Prostate gland (tissue), 2 donors: ENCODE measurements at regions of chr9 and their contacts with region 1.

Region 1: DNA sequence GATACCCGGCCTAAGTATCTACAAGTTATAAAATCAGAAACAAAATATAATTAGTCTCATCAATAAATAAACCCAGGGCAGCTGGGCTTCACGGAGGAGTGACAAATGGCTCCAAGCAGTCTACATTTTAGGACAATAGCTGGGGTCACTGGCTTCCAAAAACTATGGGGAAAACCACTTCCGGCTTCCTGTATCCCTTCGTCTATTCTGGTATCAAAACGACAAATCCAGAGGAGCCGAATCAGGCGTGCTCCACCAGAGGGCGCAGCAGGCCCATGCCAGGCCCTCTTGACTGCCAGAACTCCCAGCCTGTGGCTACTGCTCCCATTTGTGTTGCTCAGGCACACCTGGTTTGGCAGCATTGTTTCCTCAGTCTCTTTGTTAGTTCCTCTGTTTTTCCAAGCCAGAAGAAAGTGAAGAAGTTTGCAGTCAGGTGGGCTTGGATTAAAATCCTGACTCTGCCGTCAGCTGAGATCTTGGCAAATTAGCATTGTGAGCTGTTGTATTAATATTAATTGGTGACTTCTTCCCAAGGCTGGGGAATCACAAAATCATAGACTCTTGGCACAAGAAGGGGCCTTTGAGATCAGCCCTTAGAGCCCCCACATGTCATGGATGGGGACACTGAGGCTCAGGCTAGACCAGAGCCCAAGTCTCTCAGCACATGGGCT is 11.6 kb upstream of the RAB14 start:
- DNase-seq: peak; percentile 86
- H3K4me3 ChIP-seq: no peak overlapping the region
- H3K27ac ChIP-seq: no peak overlapping the region
- H3K4me1 ChIP-seq: no peaks in the 10 kb centered on the region
- H3K27me3 ChIP-seq: no peaks in the 10 kb centered on the region
- CTCF ChIP-seq: peak; percentile 76 to 97 (median 91)
- POLR2A ChIP-seq: no peak

Region 2: DNA sequence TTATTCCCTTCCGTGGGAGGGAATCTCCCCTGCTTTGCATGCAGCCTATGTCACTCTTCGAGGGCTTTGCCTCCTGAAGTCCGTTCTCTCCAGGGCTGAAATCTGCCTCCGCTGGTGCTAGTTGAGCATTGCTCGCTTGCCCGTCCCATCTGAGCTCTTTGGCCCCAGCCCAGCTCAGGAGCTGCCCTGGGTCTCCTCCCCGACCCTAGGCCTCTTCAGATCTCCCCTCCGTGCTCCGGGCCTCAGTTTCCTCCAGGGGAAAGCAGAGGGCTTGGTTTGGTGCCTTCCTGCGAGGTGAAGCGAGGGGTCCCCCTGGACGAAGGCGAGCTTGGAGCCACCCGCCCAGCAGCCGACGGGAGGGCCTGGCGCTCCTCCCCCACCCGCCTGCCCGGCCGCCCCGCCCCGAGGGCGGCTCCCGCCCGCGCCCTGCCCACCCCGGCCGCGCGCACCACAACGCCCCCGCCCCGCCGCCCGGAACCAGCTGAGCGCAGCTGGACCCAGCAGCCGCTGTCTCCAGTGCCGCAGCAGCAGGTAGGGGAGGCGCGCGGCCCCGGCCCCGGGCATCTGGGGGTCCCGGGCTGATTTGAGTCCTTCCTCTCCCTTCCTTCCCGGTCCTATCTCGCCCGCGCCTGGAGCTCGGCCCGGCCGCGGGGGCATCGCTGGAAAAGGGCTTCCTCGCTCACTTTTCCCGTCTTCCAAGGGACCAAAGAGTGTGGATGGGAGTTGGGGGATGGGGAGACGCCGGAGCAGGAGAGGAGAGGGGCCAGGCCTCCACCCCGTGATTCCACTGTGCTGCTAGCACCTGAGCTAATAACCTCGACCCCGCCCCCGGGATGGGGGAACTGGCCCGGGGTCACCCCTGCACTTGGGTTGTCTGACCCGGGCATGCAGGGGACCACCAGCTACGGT is 54.7 kb after region 1 on chr9 and contains the start of gene GSN:
- intact Hi-C with region 1: loop called (anchors 5 kb)
- DNase-seq: peak; percentile 80
- H3K4me3 ChIP-seq: peak within 1 kb of the TSS; percentile 73 to 81
- H3K27ac ChIP-seq: peak within 1 kb of the TSS; percentile 76 to 82
- H3K4me1 ChIP-seq: peaks cover 3% of the 10 kb centered on the region
- H3K27me3 ChIP-seq: no peaks in the 10 kb centered on the region
- CTCF ChIP-seq: no peak
- POLR2A ChIP-seq: peak; percentile 89
- total RNA-seq, gene GSN: 390 to 690 TPM

Region 3: GRCh38 chr9:121376214-121376830 is 163.1 kb after region 1 on chr9:
- intact Hi-C with region 1: loop called (anchors 2 kb)
- DNase-seq: no peak
- H3K4me3 ChIP-seq: no peak overlapping the region
- H3K27ac ChIP-seq: no peak overlapping the region
- H3K4me1 ChIP-seq: no peaks in the 10 kb centered on the region
- H3K27me3 ChIP-seq: no peaks in the 10 kb centered on the region
- CTCF ChIP-seq: peak in 3 of 4 experiments; percentile 14 to 61 (median 47)
- POLR2A ChIP-seq: no peak

Region 4: GRCh38 chr9:121399883-121400607 is 186.8 kb after region 1 on chr9:
- intact Hi-C with region 1: loop called (anchors 2 kb)
- DNase-seq: peak; percentile 42
- H3K4me3 ChIP-seq: no peak overlapping the region
- H3K27ac ChIP-seq: no peak overlapping the region
- H3K4me1 ChIP-seq: no peaks in the 10 kb centered on the region
- H3K27me3 ChIP-seq: no peaks in the 10 kb centered on the region
- CTCF ChIP-seq: peak; percentile 37 to 93 (median 88)
- POLR2A ChIP-seq: no peak